IMR-90 (cell line): ENCODE measurements at regions of chr1 and their contacts with region 1.

Region 1: GRCh38 chr1:95233737-95234500 is at the start of gene RWDD3:
- DNase-seq: peak; percentile 82
- ATAC-seq: peak; percentile 94
- H3K4me3 ChIP-seq: peak within 1 kb of the TSS; percentile 71
- H3K27ac ChIP-seq: peak within 1 kb of the TSS; percentile 85
- H3K4me1 ChIP-seq: peaks cover 6% of the 10 kb centered on the region
- H3K27me3 ChIP-seq: no peaks in the 10 kb centered on the region
- CTCF ChIP-seq: peak; percentile 96
- POLR2A ChIP-seq: peak; percentile 70; the same call in 1 of the 2 replicates
- RAD21 ChIP-seq: peak; percentile 75
- total RNA-seq, gene RWDD3: 10.4 and 10.6 TPM in 2 replicates

Region 2: GRCh38 chr1:93919780-93920179 is 1314.1 kb before region 1 on chr1:
- CTCF ChIA-PET with region 1: no interaction called
- POLR2A ChIA-PET with region 1: no interaction called
- dilution Hi-C with region 1: no loop called
- in situ Hi-C with region 1: no loop called
- intact Hi-C with region 1: no loop called
- DNase-seq: no peak
- ATAC-seq: no peak
- H3K4me3 ChIP-seq: no peak overlapping the region
- H3K27ac ChIP-seq: no peak overlapping the region
- H3K4me1 ChIP-seq: no peaks in the 10 kb centered on the region
- H3K27me3 ChIP-seq: peaks cover 8% of the 10 kb centered on the region
- CTCF ChIP-seq: no peak
- POLR2A ChIP-seq: no peak
- RAD21 ChIP-seq: no peak

Region 3: GRCh38 chr1:94854458-94855306 is 379.2 kb before region 1 on chr1:
- CTCF ChIA-PET with region 1: interaction called, 4 read pairs
- POLR2A ChIA-PET with region 1: no interaction called
- dilution Hi-C with region 1: no loop called
- in situ Hi-C with region 1: loop called (anchors 10 kb)
- intact Hi-C with region 1: loop called (anchors 1 kb)
- DNase-seq: peak; percentile 92
- ATAC-seq: peak; percentile 96
- H3K4me3 ChIP-seq: peak overlapping the region; percentile 41
- H3K27ac ChIP-seq: peak overlapping the region; percentile 38
- H3K4me1 ChIP-seq: peaks cover 5% of the 10 kb centered on the region
- H3K27me3 ChIP-seq: no peaks in the 10 kb centered on the region
- CTCF ChIP-seq: peak; percentile 97
- POLR2A ChIP-seq: peak; percentile 54; the same call in 1 of the 2 replicates
- RAD21 ChIP-seq: peak; percentile 97

Region 4: GRCh38 chr1:95043141-95043980 is 190.6 kb before region 1 on chr1:
- CTCF ChIA-PET with region 1: interaction called, 6 read pairs
- POLR2A ChIA-PET with region 1: no interaction called
- dilution Hi-C with region 1: no loop called
- in situ Hi-C with region 1: no loop called
- intact Hi-C with region 1: loop called (anchors 1 kb)
- DNase-seq: peak; percentile 86
- ATAC-seq: peak; percentile 90
- H3K4me3 ChIP-seq: no peak overlapping the region
- H3K27ac ChIP-seq: no peak overlapping the region
- H3K4me1 ChIP-seq: peaks cover 5% of the 10 kb centered on the region
- H3K27me3 ChIP-seq: no peaks in the 10 kb centered on the region
- CTCF ChIP-seq: peak; percentile 100
- POLR2A ChIP-seq: no peak
- RAD21 ChIP-seq: peak; percentile 97

Region 5: DNA sequence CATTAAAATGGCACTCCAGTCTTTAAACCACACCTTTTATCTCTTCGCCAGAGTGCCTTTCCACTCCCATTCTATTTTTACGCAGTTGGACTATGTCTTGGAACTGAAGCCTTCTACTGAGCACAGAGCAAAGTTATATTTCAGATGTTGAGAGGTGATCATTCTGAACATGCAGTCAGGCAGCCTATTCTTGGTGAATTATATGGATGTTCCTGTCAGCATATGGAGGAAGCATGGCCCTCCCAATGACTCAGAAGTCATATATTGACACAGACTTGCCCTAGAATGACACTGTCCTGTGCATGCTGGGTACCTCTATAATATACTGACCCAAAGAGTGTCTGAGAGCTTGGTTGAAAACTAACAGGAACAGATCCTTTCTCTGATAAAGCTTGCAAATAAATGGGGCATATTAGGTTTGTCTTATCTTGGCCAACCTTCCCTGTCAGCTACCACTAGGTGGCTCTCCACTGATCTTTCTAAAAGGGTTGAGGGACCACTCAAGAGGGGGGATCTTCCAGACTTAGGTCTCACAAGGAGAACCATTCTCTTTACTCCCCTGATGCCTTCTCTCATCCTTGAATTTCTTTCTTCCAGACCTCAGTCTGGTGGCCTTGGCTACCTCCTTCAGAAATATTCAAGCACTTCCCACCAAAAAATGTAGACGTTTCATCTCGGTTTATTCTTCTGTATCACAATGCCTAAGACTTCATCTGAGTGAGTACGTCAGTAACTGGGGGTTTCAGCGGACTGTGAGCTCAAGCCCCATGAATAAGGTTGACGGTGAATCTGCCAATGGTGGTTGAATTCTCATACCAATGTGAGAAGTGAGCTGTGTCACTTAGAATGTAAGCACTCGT is 149.4 kb before region 1 on chr1:
- CTCF ChIA-PET with region 1: interaction called, 11 read pairs
- POLR2A ChIA-PET with region 1: no interaction called
- dilution Hi-C with region 1: no loop called
- in situ Hi-C with region 1: no loop called
- intact Hi-C with region 1: loop called (anchors 1 kb)
- DNase-seq: peak; percentile 21
- ATAC-seq: no peak
- H3K4me3 ChIP-seq: no peak overlapping the region
- H3K27ac ChIP-seq: no peak overlapping the region
- H3K4me1 ChIP-seq: peaks cover 8% of the 10 kb centered on the region
- H3K27me3 ChIP-seq: peaks cover 9% of the 10 kb centered on the region
- CTCF ChIP-seq: peak; percentile 49
- POLR2A ChIP-seq: no peak
- RAD21 ChIP-seq: peak; percentile 32; the same call in 1 of the 2 replicates

Region 6: GRCh38 chr1:95323123-95323522 is 89.2 kb after region 1 on chr1:
- CTCF ChIA-PET with region 1: no interaction called
- POLR2A ChIA-PET with region 1: no interaction called
- dilution Hi-C with region 1: no loop called
- in situ Hi-C with region 1: no loop called
- intact Hi-C with region 1: no loop called
- DNase-seq: no peak
- ATAC-seq: no peak
- H3K4me3 ChIP-seq: no peak overlapping the region
- H3K27ac ChIP-seq: no peak overlapping the region
- H3K4me1 ChIP-seq: no peaks in the 10 kb centered on the region
- H3K27me3 ChIP-seq: peaks cover 2% of the 10 kb centered on the region; the same call in 1 of the 2 replicates
- CTCF ChIP-seq: no peak
- POLR2A ChIP-seq: no peak
- RAD21 ChIP-seq: no peak

Region 7: DNA sequence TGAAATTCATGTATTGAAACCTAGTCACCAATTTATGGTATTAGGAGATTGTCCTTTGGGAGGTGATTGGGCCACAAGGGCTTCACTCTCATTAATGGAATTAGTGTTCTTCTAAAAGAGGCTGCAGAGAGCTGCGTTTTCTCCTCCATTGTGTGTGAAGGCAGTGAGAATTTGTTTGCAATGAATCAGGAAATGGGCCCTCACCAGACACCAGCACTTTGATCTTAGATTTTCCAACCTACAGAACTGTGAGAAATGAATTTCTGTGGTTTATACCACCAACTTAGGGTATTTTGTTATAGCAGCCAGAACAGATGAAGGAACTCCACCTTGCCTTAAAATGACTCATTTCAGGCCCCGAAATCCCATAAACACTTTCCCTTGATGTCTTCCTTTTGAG is 544.3 kb after region 1 on chr1:
- CTCF ChIA-PET with region 1: no interaction called
- POLR2A ChIA-PET with region 1: no interaction called
- dilution Hi-C with region 1: no loop called
- in situ Hi-C with region 1: no loop called
- intact Hi-C with region 1: no loop called
- DNase-seq: no peak
- ATAC-seq: no peak
- H3K4me3 ChIP-seq: no peak overlapping the region
- H3K27ac ChIP-seq: no peak overlapping the region
- H3K4me1 ChIP-seq: no peaks in the 10 kb centered on the region
- H3K27me3 ChIP-seq: no peaks in the 10 kb centered on the region
- CTCF ChIP-seq: no peak
- POLR2A ChIP-seq: no peak
- RAD21 ChIP-seq: no peak